IMR-90 (cell line): ENCODE measurements at regions of chr1 and their contacts with region 1.

Region 1: GRCh38 chr1:21659099-21659923 is 9.8 kb downstream of the RAP1GAP start:
- DNase-seq: peak; percentile 36
- ATAC-seq: peak; percentile 97
- H3K4me3 ChIP-seq: no peak overlapping the region
- H3K27ac ChIP-seq: no peak overlapping the region
- H3K4me1 ChIP-seq: no peaks in the 10 kb centered on the region
- H3K27me3 ChIP-seq: peaks cover 55% of the 10 kb centered on the region
- CTCF ChIP-seq: peak; percentile 95
- POLR2A ChIP-seq: no peak
- RAD21 ChIP-seq: peak; percentile 85

Region 2: DNA sequence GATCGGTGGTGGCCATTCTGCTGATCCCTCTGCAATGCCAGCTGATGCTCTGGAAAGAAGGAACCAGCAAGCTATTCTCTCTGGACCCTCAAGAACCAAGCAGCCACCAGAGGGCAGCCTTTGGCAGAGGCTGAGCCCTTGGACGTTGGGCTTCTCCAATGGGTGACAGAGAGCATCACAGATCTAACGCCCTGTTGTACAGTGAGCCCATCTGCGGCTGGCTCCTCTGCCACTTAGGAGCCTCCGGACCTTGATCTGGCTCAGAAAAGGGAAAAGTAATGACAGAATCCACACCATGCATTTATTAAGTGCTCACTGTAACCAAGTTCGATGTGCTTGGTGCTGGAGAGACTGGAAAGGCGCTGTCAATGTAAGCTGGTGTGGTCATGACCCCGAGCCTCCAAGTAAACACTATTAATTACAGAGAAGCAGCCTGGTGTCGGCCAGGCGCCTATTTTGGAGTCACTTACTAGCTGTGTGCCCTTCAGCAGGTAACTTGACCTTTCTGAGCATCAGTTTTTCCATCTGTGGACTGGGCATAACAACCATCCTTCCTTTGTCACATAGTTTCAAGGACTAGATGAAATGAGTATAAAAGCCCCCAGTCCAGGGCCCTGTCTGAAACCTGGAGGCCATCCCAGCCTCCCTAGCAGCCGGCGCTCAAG is 403.9 kb before region 1 on chr1:
- CTCF ChIA-PET with region 1: no interaction called
- POLR2A ChIA-PET with region 1: no interaction called
- dilution Hi-C with region 1: no loop called
- in situ Hi-C with region 1: loop called (anchors 10 kb)
- intact Hi-C with region 1: loop called (anchors 10 kb)
- DNase-seq: peak; percentile 79
- ATAC-seq: peak; percentile 90
- H3K4me3 ChIP-seq: no peak overlapping the region
- H3K27ac ChIP-seq: no peak overlapping the region
- H3K4me1 ChIP-seq: peaks cover 8% of the 10 kb centered on the region
- H3K27me3 ChIP-seq: no peaks in the 10 kb centered on the region
- CTCF ChIP-seq: peak; percentile 85
- POLR2A ChIP-seq: 0 out of 2 replicates have a peak, but pooled peaks have one; percentile 40
- RAD21 ChIP-seq: peak; percentile 96

Region 3: GRCh38 chr1:21378705-21379494 is 280.4 kb before region 1 on chr1:
- CTCF ChIA-PET with region 1: no interaction called
- POLR2A ChIA-PET with region 1: no interaction called
- dilution Hi-C with region 1: no loop called
- in situ Hi-C with region 1: loop called (anchors 10 kb)
- intact Hi-C with region 1: no loop called
- DNase-seq: no peak
- ATAC-seq: no peak
- H3K4me3 ChIP-seq: no peak overlapping the region
- H3K27ac ChIP-seq: no peak overlapping the region
- H3K4me1 ChIP-seq: no peaks in the 10 kb centered on the region
- H3K27me3 ChIP-seq: peaks cover 22% of the 10 kb centered on the region
- CTCF ChIP-seq: no peak
- POLR2A ChIP-seq: no peak
- RAD21 ChIP-seq: no peak

Region 4: DNA sequence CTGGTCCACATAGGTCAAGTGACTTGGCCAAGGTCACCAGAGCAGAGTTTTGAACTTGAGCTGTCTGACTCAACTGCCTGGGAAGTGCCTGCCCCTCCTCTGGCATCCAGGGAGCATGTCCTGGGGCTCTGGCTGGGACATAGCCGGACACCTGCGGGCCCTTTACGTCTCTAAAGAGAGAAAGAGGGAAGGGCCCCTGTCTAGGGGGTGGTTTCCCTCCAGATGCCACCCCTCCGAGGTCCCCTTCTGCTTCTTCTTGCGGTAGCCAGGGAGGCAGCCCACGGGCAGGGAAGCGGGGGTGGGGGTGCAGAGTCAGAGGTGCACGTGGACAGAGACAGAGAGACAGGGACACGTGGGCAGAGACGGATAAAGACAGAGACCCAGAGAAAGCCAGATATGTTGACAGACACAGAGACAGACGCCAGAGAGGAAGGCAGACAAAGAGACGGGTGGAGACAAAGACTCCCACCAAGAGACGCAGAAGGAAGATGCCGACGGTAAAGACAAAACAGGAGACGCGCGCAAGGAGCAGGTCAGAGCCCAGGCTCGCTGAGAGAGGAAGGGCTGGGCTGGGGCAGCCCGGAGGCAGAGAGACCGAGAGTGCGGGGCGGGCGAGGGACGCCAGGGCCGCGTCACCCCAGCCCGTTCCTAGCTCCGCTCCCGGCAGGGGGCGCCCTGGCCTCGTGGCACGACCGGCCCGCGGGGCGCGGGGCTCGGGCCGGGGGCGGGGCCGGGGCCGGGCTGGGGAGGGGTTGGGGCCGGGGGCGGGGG is 150.5 kb before region 1 on chr1:
- CTCF ChIA-PET with region 1: no interaction called
- POLR2A ChIA-PET with region 1: no interaction called
- dilution Hi-C with region 1: no loop called
- in situ Hi-C with region 1: no loop called
- intact Hi-C with region 1: loop called (anchors 5 kb)
- DNase-seq: peak; percentile 31
- ATAC-seq: peak; percentile 83
- H3K4me3 ChIP-seq: 0 out of 2 replicates have a peak overlapping the region, but pooled peaks have one; percentile 4
- H3K27ac ChIP-seq: no peak overlapping the region
- H3K4me1 ChIP-seq: peaks cover 12% of the 10 kb centered on the region
- H3K27me3 ChIP-seq: peaks cover 16% of the 10 kb centered on the region
- CTCF ChIP-seq: peak; percentile 68
- POLR2A ChIP-seq: no peak
- RAD21 ChIP-seq: peak; percentile 65

Region 5: DNA sequence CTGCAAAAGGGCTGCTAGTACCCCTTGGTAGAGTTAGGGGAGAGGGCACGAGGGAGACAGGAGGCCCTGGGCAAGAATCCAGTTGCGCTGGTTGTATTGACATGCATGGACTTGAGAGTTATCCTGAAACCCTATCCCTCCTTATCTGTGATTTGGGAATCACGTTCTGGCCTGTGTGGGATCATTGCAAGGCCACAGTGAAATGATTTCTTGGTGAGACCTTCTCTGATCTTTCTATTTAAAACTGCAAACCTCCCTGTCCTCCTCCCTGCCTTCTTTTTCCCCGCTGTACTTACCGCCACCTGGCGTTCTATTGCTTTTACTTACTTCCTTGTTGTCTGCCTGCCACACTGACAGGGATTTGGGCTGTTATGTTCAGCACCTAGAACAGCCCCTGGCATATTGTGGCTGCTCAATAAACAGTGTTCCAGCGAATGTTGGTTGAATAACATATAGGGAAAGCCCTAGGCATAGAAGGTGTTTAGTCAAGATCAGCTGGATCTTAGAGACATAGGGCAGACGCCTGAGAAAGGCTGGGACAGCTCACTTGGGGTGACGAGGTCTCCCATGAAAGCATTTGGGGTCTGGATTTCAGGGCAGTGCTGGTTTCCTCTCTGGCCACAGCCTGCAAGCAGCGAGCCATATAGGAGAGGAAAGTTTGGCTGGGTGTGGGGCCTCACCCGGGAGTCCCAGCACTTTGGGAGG is 124.5 kb before region 1 on chr1:
- CTCF ChIA-PET with region 1: no interaction called
- POLR2A ChIA-PET with region 1: no interaction called
- dilution Hi-C with region 1: no loop called
- in situ Hi-C with region 1: no loop called
- intact Hi-C with region 1: loop called (anchors 10 kb)
- DNase-seq: peak; percentile 77
- ATAC-seq: peak; percentile 91
- H3K4me3 ChIP-seq: no peak overlapping the region
- H3K27ac ChIP-seq: no peak overlapping the region
- H3K4me1 ChIP-seq: peaks cover 2% of the 10 kb centered on the region; the same call in 1 of the 2 replicates
- H3K27me3 ChIP-seq: peaks cover 24% of the 10 kb centered on the region
- CTCF ChIP-seq: peak; percentile 74
- POLR2A ChIP-seq: no peak
- RAD21 ChIP-seq: peak; percentile 75

Region 6: DNA sequence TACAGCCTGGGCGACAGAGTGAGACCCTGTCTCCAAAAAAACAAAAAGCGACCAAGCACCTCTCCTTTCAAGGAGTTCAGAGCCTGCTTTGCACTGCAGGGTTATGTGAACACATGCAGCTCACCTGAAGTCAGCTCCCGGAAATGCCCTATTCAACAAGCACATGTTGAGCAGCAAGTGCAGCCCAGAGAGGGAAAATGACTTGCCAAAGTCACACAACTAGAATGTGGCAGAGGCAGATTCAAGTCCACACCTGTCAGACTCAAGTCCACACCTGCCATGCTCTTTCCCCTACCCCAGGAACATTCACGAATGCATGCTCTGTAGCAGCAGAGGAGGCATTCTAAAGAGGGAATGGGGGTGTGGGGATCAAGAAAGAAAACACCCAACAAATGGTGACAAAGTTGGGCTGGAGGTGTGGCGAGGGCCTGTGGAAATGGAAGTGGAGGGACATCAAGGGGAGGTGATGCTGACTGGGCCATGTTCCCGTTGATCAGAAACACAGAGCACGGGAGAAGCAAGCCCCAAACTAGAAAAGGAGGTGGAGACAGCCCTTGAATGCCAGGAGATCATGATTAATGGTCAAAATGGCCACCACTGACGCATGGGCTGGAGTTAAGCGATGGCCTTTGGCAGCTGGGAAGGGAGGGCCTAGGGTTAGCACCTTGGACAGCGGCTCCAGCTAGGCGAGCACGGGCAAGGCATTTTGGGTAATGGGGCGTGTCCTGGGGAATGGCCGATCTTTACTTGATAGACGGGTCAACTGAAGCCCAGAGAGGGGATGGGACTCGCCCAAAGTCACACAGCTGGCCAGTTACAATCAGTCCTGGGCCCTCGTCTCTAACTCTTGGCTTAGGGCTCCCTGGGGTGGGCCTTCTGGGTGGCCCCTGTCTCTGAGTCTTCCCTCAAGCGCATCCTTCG is 11.6 kb before region 1 on chr1:
- CTCF ChIA-PET with region 1: interaction called, 3 read pairs
- POLR2A ChIA-PET with region 1: no interaction called
- dilution Hi-C with region 1: no loop called
- in situ Hi-C with region 1: no loop called
- intact Hi-C with region 1: loop called (anchors 1 kb)
- DNase-seq: peak; percentile 59
- ATAC-seq: peak; percentile 93
- H3K4me3 ChIP-seq: no peak overlapping the region
- H3K27ac ChIP-seq: no peak overlapping the region
- H3K4me1 ChIP-seq: peaks cover 3% of the 10 kb centered on the region; the same call in 1 of the 2 replicates
- H3K27me3 ChIP-seq: peaks cover 50% of the 10 kb centered on the region
- CTCF ChIP-seq: no peak
- POLR2A ChIP-seq: no peak
- RAD21 ChIP-seq: no peak